GM23248 (cell line): ENCODE measurements at regions of chr17 and their contacts with region 1.

Region 1: GRCh38 chr17:72126563-72127486 is 6.0 kb downstream of the SOX9 start:
- DNase-seq: peak; percentile 88
- H3K4me3 ChIP-seq: no peak overlapping the region
- H3K27ac ChIP-seq: peak overlapping the region; percentile 61
- H3K4me1 ChIP-seq: peaks cover 37% of the 10 kb centered on the region
- H3K27me3 ChIP-seq: no peaks in the 10 kb centered on the region

Region 2: DNA sequence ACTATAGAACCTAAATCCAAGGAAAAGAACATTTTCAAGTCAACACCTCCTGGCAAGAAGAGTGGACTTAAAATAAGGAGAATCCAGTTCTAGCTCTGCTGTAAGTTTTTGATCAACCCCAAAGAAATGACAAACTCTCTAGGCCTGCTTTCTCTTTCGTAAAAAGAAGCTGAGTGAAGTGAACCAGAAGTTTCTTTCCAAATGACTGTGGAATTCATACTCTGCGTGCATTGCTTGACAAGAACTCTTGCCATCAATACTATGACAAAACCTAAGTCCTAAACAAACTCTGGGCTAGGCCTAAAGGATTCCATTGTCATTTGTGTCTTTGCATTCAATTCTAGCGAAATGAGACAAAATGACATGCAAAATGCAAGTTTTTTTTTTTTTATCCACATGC is 193.5 kb before region 1 on chr17:
- in situ Hi-C with region 1: no loop called
- DNase-seq: no peak
- H3K4me3 ChIP-seq: no peak overlapping the region
- H3K27ac ChIP-seq: no peak overlapping the region
- H3K4me1 ChIP-seq: no peaks in the 10 kb centered on the region
- H3K27me3 ChIP-seq: no peaks in the 10 kb centered on the region

Region 3: GRCh38 chr17:72021417-72022041 is 105.3 kb before region 1 on chr17:
- in situ Hi-C with region 1: no loop called
- DNase-seq: no peak
- H3K4me3 ChIP-seq: no peak overlapping the region
- H3K27ac ChIP-seq: no peak overlapping the region
- H3K4me1 ChIP-seq: no peaks in the 10 kb centered on the region
- H3K27me3 ChIP-seq: no peaks in the 10 kb centered on the region

Region 4: DNA sequence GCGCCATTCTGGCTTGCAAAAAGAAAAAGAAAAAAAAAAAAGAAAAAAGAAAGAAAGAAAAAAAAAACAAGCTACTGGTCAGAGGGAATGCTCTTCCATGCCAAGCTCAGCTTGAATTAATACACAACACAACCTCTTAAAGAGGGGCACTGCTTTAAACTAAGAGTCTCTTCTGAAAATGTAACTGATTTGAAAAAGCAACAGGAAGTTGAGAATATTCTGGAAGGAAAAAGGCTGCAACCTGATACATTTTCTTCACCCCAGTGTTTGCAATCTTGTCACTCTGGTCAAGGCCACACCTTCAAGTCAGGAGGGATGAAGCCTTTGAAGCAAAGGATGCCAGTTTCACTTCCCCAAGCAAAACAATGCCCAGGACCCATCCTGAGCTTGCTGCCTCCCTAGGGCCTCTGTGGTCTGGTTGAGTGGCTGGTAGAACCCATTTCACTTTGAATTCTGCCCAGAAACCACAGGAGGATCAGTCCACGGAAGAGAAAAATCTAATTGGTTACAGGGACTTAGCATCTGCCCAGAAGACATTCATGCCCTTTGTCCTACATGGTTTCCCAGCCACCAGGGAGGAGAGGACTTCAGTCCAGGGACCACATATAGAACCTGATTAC is 383.7 kb after region 1 on chr17:
- in situ Hi-C with region 1: loop called (anchors 25 kb)
- DNase-seq: peak; percentile 7
- H3K4me3 ChIP-seq: no peak overlapping the region
- H3K27ac ChIP-seq: no peak overlapping the region
- H3K4me1 ChIP-seq: peaks cover 9% of the 10 kb centered on the region
- H3K27me3 ChIP-seq: no peaks in the 10 kb centered on the region